Panc1 (cell line): ENCODE measurements at regions of chr14 and their contacts with region 1.

Region 1: DNA sequence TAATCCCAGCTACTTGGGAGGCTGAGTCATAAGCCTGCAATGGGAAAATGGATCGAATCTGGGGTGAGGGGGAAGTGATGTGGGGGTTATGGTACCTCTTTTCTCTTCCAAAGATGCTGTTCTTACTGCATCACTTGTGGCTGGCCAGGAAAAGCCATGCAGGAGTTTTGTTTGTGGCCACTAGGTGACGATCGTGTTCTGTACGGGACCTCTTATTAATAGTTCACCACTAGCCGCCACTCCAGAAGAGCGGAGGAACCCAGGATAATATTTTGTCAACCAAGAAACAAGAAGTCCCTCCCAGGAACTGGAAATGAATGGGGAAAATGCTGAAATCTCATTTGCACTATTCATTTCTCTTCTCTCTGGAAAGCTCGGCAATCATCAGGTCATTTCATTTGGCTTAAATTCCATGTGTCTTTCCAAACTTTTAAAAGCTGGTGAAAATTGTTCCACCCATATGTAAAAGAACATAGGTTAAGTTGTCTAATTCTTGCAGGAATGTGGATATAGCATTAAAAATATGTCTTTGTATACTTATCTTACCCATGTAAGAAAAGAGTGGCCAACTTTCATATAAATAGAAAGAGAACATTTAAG is 8.9 kb downstream of the GPR65 start:
- DNase-seq: peak; percentile 48
- ATAC-seq: peak; percentile 96
- H3K4me3 ChIP-seq: no peak overlapping the region
- H3K27ac ChIP-seq: no peak overlapping the region
- H3K4me1 ChIP-seq: no peaks in the 10 kb centered on the region
- H3K27me3 ChIP-seq: no peaks in the 10 kb centered on the region
- CTCF ChIP-seq: peak; percentile 96

Region 2: DNA sequence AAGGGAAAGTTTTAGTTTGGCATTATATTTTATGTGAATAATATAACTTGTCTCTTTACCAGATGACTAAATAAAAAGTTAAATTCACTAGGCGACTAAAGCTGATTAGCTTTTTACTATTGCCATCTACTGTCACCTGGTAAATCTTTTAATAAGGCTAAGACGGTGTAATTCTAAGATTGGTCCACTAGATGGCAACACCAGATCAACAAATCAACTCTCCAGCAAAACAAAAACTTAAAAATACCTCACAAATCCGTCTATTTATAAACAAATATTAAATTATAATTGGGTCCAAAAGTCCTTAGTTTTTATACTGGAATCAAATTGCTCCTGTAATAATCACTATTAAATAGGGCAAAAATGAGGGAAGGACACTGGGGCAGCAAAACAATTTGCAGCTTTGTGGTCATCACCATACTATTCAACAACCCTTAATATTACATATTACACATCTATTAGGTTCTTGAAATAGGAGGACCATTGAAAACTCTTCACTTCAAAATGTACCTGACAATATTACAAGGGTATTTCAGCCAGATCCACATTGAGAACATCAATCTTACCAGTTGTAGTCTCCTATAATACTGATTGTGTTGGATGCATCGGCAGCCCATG is 68.8 kb before region 1 on chr14:
- CTCF ChIA-PET with region 1: interaction called, 3 read pairs
- POLR2A ChIA-PET with region 1: no interaction called
- in situ Hi-C with region 1: no loop called
- intact Hi-C with region 1: loop called (anchors 5 kb)
- DNase-seq: peak; percentile 10
- ATAC-seq: no peak
- H3K4me3 ChIP-seq: no peak overlapping the region
- H3K27ac ChIP-seq: no peak overlapping the region
- H3K4me1 ChIP-seq: no peaks in the 10 kb centered on the region
- H3K27me3 ChIP-seq: no peaks in the 10 kb centered on the region
- CTCF ChIP-seq: peak; percentile 66; the same call in 1 of the 2 replicates

Region 3: GRCh38 chr14:88168498-88169165 is 154.8 kb after region 1 on chr14:
- CTCF ChIA-PET with region 1: interaction called, 5 read pairs
- POLR2A ChIA-PET with region 1: no interaction called
- in situ Hi-C with region 1: no loop called
- intact Hi-C with region 1: loop called (anchors 1 kb)
- DNase-seq: peak; percentile 20
- ATAC-seq: peak; percentile 87
- H3K4me3 ChIP-seq: no peak overlapping the region
- H3K27ac ChIP-seq: no peak overlapping the region
- H3K4me1 ChIP-seq: no peaks in the 10 kb centered on the region
- H3K27me3 ChIP-seq: no peaks in the 10 kb centered on the region
- CTCF ChIP-seq: peak; percentile 80

Region 4: DNA sequence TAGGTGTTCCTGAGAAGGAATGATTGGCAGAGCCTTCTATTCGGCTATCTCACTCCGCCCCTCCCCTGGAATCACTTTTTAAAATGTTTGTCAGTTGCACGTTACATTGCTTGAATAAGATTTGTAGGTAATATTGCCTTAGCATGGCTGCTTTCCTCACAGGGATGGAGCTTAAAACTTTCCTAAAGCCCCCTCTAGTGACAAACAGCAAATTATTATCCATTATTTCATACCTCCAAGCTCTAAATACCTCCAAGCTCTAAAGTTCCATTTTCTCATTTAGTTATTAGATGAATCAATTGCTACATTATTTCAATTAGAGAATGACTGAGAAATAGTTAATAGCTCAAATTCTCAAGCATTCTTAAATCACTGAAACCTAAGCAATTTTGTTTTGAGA is 366.6 kb after region 1 on chr14:
- CTCF ChIA-PET with region 1: no interaction called
- POLR2A ChIA-PET with region 1: no interaction called
- in situ Hi-C with region 1: no loop called
- intact Hi-C with region 1: loop called (anchors 2 kb)
- DNase-seq: no peak
- ATAC-seq: no peak
- H3K4me3 ChIP-seq: no peak overlapping the region
- H3K27ac ChIP-seq: no peak overlapping the region
- H3K4me1 ChIP-seq: no peaks in the 10 kb centered on the region
- H3K27me3 ChIP-seq: no peaks in the 10 kb centered on the region
- CTCF ChIP-seq: peak; percentile 44; the same call in 1 of the 2 replicates